Activated CD4-positive, alpha-beta T cell treated with anti-CD3 and anti-CD28 coated beads, Interleukin-2, amount 10 ng/mL, durations not matched to agents 7 days and 5 days (primary cell): ENCODE measurements at regions of chr6 and their contacts with region 1.

Region 1: DNA sequence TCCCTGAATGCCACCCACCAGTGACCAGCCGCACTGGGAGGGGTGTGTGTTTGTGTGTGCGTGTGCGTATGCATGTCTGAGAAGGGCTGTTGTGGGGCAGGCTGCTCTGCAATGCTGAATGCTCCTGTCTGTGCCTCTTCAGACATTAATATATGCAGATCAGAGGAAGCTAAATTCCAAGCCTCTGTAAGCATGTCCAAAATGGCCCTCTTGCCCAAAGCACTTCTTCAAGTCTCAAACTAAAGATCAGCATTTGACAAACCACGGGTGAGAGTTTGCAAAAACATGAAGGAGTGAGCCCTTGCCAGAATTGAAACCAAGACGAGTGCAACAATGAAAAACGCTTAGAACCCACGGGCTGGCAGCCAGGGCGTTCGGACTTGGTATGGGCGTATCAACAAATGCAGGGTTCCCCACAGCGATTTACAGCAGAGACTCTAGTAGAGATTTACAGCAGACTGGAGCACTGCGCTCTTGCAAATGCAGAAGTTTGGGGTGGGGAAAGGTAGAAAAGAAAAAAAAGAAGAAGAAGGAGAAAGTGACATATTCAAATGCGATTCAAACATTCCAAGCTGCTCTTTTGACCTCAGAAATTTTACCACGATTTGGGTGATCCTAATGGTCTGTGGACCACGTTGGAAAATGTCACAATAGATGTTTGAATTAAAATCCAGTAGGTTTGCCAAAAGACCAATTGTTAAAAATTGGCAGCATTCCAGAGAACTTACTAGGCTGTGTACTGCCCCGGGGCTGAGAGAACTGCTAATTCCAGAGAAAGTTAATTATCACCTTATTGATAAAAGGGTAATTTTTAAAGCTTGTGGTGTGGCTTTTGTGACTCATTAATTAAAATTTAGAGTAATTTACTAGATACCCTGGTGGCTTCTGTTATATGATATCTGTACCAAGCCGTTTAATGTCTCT is 3.5 kb downstream of the SCML4 start:
- DNase-seq: peak; percentile 63
- H3K4me3 Mint-ChIP-seq: peak overlapping the region; percentile 79
- H3K27ac Mint-ChIP-seq: peak overlapping the region; percentile 96
- H3K4me1 Mint-ChIP-seq: peaks cover 83% of the 10 kb centered on the region
- H3K27me3 Mint-ChIP-seq: no peaks in the 10 kb centered on the region

Region 2: DNA sequence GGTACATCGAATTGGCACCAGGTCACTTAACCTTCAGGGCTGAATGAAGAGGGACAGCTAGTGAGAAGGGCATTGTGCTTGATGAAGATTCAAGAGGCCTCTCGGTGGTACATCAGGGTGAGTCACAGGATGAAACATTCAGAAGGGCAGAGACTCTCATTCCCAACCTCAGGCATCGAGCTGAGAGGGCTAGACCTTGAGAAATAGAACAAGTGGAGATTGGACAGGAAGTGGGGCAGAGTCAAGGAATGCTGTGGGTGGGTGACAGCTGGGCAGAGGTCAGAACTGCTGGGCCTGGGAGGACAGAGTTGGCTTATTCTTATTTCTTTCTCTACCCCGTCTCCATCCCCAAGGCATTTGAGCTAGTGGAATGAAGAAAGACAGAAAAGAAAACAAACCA is 122.5 kb before region 1 on chr6:
- CTCF ChIA-PET with region 1: no interaction called
- POLR2A ChIA-PET with region 1: no interaction called
- DNase-seq: no peak
- H3K4me3 Mint-ChIP-seq: no peak overlapping the region
- H3K27ac Mint-ChIP-seq: no peak overlapping the region
- H3K4me1 Mint-ChIP-seq: peaks cover 4% of the 10 kb centered on the region
- H3K27me3 Mint-ChIP-seq: peaks cover 3% of the 10 kb centered on the region

Region 3: DNA sequence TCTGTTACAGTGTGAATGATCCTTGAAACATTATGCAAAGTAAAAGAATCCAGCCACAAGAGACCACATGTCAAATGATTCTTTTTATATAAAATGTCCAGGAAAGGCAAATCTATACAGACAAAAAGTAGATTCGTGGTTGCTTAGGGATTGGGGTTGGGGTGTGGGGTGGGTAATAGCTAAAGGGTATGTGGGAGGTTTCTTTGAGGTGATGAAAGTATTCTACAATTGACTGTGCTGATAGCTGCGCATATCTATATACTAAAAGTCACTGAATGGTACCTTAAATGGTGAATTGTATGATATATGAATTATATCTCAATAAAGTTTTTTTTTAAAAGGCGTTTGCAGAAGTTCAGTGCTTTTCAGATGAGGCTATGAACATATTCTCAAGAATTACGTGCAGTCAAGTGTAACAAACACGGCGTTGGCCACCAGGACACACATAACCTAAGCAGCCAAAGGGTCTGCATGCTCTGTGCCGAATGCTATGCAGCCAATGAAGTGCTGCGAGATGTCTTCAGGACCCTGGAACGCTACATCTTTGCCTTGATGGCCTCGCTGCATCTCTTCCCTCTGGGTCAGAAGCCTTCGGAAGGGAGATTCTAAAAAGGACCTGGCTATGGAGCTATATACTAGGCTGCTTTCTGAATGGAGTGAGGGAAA is 93.4 kb before region 1 on chr6:
- CTCF ChIA-PET with region 1: no interaction called
- POLR2A ChIA-PET with region 1: interaction called, 13 read pairs
- DNase-seq: no peak
- H3K4me3 Mint-ChIP-seq: no peak overlapping the region
- H3K27ac Mint-ChIP-seq: no peak overlapping the region
- H3K4me1 Mint-ChIP-seq: peaks cover 86% of the 10 kb centered on the region
- H3K27me3 Mint-ChIP-seq: no peaks in the 10 kb centered on the region

Region 4: GRCh38 chr6:107786709-107787588 is 33.7 kb before region 1 on chr6:
- CTCF ChIA-PET with region 1: interaction called, 10 read pairs
- POLR2A ChIA-PET with region 1: no interaction called
- DNase-seq: peak; percentile 74
- H3K4me3 Mint-ChIP-seq: peak overlapping the region; percentile 70
- H3K27ac Mint-ChIP-seq: peak overlapping the region; percentile 91
- H3K4me1 Mint-ChIP-seq: peaks cover 72% of the 10 kb centered on the region
- H3K27me3 Mint-ChIP-seq: no peaks in the 10 kb centered on the region

Region 5: GRCh38 chr6:108052706-108053105 is 232.1 kb after region 1 on chr6:
- CTCF ChIA-PET with region 1: no interaction called
- POLR2A ChIA-PET with region 1: no interaction called
- DNase-seq: no peak
- H3K4me3 Mint-ChIP-seq: no peak overlapping the region
- H3K27ac Mint-ChIP-seq: no peak overlapping the region
- H3K4me1 Mint-ChIP-seq: no peaks in the 10 kb centered on the region
- H3K27me3 Mint-ChIP-seq: no peaks in the 10 kb centered on the region